HEK293T (cell line): ENCODE measurements at regions of chr3 and their contacts with region 1.

Region 1: DNA sequence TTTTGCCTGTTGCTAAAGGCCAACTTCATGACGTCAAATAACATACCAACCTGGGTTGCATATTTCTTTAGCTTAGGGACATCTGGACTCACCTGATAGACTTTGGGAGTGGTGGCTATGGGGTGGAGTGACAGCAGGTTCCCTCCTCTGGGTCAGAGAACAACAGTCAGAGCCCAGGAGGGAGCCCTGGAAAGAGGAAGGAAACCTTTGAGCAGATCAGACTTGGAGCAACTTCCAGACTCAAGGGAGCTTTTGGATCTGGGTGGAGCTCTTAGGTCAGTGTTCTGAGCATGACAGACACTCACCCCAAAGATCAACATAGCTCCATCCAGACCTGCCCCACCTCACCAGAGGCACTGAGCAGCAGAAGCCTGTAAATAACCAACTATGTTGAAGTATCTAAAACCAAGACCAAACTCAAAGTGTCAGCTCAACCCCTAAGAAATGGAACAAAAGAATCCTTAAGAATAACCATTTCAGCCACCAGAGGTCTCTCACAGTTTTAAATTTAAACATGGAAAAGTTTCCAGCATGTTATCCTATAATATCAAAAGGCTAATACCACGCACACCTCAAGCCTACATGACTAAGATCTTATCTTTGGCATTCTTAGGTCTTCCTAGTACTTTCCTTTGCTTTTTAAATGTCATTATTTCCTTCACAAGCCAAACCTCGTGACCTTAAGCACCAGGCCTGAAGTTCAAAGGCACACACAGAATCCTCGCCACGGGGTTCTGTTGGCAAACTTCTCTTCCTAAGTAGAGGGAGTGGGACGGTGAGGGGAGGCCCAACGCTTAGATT is 56.4 kb downstream of the UMPS start:
- DNase-seq: no peak

Region 2: GRCh38 chr3:124812291-124813265 is 25.9 kb after region 1 on chr3:
- CTCF ChIA-PET with region 1: no interaction called
- POLR2A ChIA-PET with region 1: no interaction called
- DNase-seq: no peak

Region 3: GRCh38 chr3:124895756-124896155 is 109.1 kb after region 1 on chr3:
- CTCF ChIA-PET with region 1: interaction called, 17 read pairs
- POLR2A ChIA-PET with region 1: no interaction called
- DNase-seq: no peak